ENCODE measurements at regions of chr13 and their contacts with region 1.

Region 1: GRCh38 chr13:30735025-30735871 is at the start of gene ALOX5AP:
- DNase-seq: peak in 32 of 35 experiments; percentile 18 to 64 (median 31)
- ATAC-seq: peak; percentile 49 to 73 (median 64)
- H3K4me3 ChIP-seq: peak within 1 kb of the TSS; percentile 43 to 67
- H3K4me3 Mint-ChIP-seq: peak within 1 kb of the TSS; percentile 78 to 96 (median 94)
- H3K27ac ChIP-seq: peak within 1 kb of the TSS; percentile 72
- H3K27ac Mint-ChIP-seq: peak within 1 kb of the TSS; percentile 98 to 99
- H3K4me1 ChIP-seq: peaks cover 25 to 46% of the 10 kb centered on the region in 2 experiments
- H3K4me1 Mint-ChIP-seq: peaks cover 65 to 69% (median 68%) of the 10 kb centered on the region in 3 donors
- H3K27me3 ChIP-seq: peaks cover 0 to 11% of the 10 kb centered on the region in 2 experiments
- H3K27me3 Mint-ChIP-seq: no peaks in the 10 kb centered on the region
- total RNA-seq, gene ALOX5AP: 24.2 to 64.9 (median 50.8) TPM

Region 2: DNA sequence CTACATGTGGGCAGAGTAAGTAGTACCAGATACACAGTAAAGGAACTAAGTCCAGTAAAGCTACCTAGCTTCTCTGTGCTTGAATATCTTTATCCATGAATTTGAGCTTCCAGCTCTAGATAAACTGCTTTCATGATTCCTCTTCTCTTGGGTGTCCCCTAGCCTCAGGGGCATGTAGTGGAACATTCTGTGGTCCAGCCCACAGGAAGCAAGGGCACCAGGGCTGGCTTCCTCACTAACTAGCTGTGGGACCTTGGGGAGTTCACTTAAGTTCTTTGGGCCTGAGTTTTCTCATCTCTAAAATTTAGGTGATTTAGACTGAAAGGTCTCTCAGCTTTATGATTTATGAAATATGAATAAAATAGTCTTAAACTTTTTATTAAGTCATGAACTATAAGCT is 613.6 kb before region 1 on chr13:
- CTCF ChIA-PET with region 1: no interaction called
- POLR2A ChIA-PET with region 1: interaction called in 1 of 2 experiments, 11 read pairs
- DNase-seq: no peak
- ATAC-seq: no peak
- H3K4me3 ChIP-seq: no peak overlapping the region
- H3K4me3 Mint-ChIP-seq: no peak overlapping the region
- H3K27ac ChIP-seq: no peak overlapping the region
- H3K27ac Mint-ChIP-seq: no peak overlapping the region
- H3K4me1 ChIP-seq: peaks cover 21 to 30% of the 10 kb centered on the region in 2 experiments
- H3K4me1 Mint-ChIP-seq: peaks cover 37 to 54% (median 40%) of the 10 kb centered on the region in 3 donors
- H3K27me3 ChIP-seq: no peaks in the 10 kb centered on the region
- H3K27me3 Mint-ChIP-seq: no peaks in the 10 kb centered on the region

Region 3: GRCh38 chr13:31930901-31931522 is 1195.8 kb after region 1 on chr13:
- CTCF ChIA-PET with region 1: interaction called in 1 of 2 experiments, 12 read pairs
- POLR2A ChIA-PET with region 1: no interaction called
- DNase-seq: no peak
- ATAC-seq: peak in 3 of 4 experiments; percentile 48 to 71 (median 49)
- H3K4me3 ChIP-seq: no peak overlapping the region
- H3K4me3 Mint-ChIP-seq: no peak overlapping the region
- H3K27ac ChIP-seq: no peak overlapping the region
- H3K27ac Mint-ChIP-seq: no peak overlapping the region
- H3K4me1 ChIP-seq: peaks cover 0 to 12% of the 10 kb centered on the region in 2 experiments
- H3K4me1 Mint-ChIP-seq: peaks cover 8 to 15% (median 9%) of the 10 kb centered on the region in 3 donors
- H3K27me3 ChIP-seq: no peaks in the 10 kb centered on the region
- H3K27me3 Mint-ChIP-seq: peaks cover 0 to 1% of the 10 kb centered on the region in 2 donors

Measured in T-cell (primary cell).